Common myeloid progenitor, CD34-positive (primary cell): ENCODE measurements at regions of chr17 and their contacts with region 1.

Region 1: GRCh38 chr17:10844621-10845387 is 6.9 kb upstream of the PIRT start:
- DNase-seq: peak; percentile 74 to 80 (median 79)
- H3K4me3 ChIP-seq: peak overlapping the region; percentile 33 to 84 (median 63)
- H3K27ac ChIP-seq: no peak overlapping the region
- H3K4me1 ChIP-seq: peaks cover 0 to 7% (median 3%) of the 10 kb centered on the region in 4 experiments
- H3K27me3 ChIP-seq: peaks cover 0 to 1% (median 0%) of the 10 kb centered on the region in 5 experiments

Region 2: DNA sequence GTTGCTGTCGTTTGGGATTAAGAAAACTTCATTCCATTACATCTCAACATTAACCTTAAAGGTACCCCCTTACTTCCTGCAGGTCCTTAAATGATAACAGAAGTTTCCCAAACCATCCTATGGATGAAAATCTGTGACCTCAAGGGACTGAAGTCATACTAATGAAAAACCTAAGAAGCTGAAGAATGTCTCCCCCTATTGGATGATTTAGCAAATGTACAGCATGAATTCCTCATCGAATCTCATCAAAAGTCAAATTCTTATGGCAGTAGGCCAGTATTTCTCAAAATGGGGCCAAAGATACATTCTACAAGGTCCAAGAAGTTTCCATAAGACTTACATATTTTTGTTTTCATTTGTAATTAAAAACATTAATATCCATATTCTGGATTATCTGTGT is 161.0 kb before region 1 on chr17:
- CTCF ChIA-PET with region 1: no interaction called
- POLR2A ChIA-PET with region 1: no interaction called
- DNase-seq: peak; percentile 57 to 70 (median 67)
- H3K4me3 ChIP-seq: no peak overlapping the region
- H3K27ac ChIP-seq: no peak overlapping the region
- H3K4me1 ChIP-seq: no peaks in the 10 kb centered on the region
- H3K27me3 ChIP-seq: no peaks in the 10 kb centered on the region

Region 3: DNA sequence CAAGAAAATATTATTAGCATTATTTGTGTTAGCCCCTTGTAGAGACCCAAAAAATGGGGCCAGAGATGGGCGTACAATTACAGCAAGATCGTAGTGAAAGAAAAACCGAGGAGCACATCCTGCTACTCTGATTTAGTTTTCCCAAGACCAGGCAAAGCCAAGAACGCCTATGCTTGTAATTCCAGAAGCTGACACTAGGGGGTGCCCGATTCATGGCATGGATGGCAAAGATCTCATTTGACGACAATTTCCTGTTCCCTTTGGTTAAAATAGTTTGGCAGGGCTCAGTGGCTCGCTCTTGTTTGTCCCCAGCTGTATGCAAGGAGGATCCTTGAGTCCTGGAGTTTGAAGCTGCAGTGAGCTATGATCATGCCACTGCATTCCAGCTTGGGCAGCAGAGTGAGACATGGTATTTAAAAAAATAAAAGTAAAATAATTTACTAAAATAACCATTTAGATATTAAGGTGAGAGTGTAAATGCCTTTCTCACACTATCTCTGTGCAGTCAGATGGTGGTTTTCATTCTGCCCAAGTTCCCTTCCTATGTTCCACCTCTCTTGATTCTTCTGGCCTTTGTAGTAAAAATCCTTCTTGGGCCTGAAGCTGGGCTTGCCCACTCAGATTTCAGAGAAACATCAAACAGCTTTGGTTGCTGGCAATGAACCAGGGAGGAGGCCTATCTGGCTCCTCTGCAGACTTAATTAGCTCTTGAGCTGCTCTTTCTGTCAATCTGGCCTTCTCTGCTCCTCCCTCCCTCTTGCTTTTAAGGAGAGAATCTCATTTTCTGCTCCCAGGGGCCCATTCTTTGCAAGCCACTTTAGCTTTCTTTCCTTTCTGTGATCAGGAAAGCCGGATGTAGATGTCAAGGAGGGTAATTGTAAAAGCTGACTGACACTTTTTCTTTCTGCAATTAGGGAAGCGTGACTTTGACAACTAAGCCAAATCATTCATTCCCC is 72.1 kb before region 1 on chr17:
- CTCF ChIA-PET with region 1: interaction called, 16 read pairs
- POLR2A ChIA-PET with region 1: interaction called, 4 read pairs
- DNase-seq: peak; percentile 49 to 64 (median 50)
- H3K4me3 ChIP-seq: no peak overlapping the region
- H3K27ac ChIP-seq: no peak overlapping the region
- H3K4me1 ChIP-seq: peaks cover 0 to 5% (median 0%) of the 10 kb centered on the region in 4 experiments
- H3K27me3 ChIP-seq: no peaks in the 10 kb centered on the region

Region 4: DNA sequence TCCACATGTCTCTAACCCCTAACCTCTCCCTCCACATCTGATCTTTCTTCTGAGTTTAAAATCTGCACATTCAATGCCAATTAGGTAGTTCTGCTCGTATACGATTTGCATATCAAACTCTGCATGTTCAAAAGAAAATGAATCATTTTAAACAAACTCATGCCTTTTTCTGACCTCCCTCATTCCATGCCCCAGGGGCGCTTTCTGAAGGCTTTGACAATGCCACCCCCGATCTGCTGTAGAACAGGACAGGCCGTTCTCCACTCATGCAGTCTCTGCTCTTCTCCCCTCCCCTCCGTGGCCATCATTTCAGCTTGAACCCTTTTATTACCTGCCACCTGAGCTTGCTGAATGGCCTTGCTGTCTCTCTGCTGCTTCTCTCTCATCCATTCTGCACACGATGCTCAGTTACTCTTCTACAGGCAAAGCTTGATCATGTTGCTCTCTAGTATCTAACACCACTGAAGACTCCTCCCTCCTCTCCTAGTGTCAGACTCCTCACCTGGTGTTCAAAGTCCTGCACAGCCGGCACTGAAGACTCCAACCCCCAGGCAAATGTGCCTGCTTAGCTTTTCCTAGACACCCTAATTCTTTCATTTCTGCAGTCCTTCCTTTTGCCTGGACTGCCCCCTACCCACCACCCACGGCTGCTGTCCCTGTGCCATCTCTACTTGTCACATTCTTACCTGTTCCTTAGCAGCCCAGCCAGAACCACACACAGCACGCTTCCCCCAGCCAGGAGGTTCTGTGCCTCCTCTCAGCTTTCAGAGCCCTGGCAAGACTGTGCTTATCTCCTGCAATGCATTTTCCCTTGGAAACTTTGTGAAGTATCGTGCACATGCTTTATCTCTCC is 47.1 kb before region 1 on chr17:
- CTCF ChIA-PET with region 1: no interaction called
- POLR2A ChIA-PET with region 1: no interaction called
- DNase-seq: no peak
- H3K4me3 ChIP-seq: no peak overlapping the region
- H3K27ac ChIP-seq: no peak overlapping the region
- H3K4me1 ChIP-seq: peaks cover 0 to 17% (median 7%) of the 10 kb centered on the region in 4 experiments
- H3K27me3 ChIP-seq: no peaks in the 10 kb centered on the region